ENCODE measurements at regions of chr13 and their contacts with region 1.

Region 1: GRCh38 chr13:93450191-93450621 is 223.6 kb downstream of the GPC6 start:
- DNase-seq: no peak
- ATAC-seq: no peak
- H3K4me3 ChIP-seq: no peak overlapping the region
- H3K27ac ChIP-seq: no peak overlapping the region
- H3K4me1 ChIP-seq: no peaks in the 10 kb centered on the region
- H3K27me3 ChIP-seq: no peaks in the 10 kb centered on the region
- CTCF ChIP-seq: no peak
- POLR2A ChIP-seq: no peak

Region 2: DNA sequence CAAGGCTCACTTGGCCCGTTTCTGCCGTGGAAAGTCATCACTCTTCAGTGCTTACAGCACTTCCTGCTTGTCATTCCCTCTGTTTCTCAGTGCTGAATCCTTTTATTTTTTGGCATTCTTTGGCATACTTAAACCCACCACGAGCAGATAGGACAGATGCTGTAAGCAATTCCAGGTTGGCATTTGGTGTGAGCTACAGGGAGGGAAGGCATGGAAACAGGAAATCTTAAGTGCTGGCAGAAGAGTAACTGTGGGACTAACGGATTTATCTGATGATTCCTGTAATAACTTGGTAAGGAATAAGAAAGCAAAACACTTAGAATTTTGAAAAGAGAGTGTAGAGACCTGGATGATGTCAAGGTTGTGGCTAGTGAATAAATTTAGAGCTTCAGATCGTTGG is 49.8 kb after region 1 on chr13:
- intact Hi-C with region 1: loop called in 1 of 10 experiments (anchors 5 kb)
- DNase-seq: no peak
- ATAC-seq: no peak
- H3K4me3 ChIP-seq: peak overlapping the region in 1 of 12 donors; percentile 8
- H3K27ac ChIP-seq: no peak overlapping the region
- H3K4me1 ChIP-seq: no peaks in the 10 kb centered on the region
- H3K27me3 ChIP-seq: no peaks in the 10 kb centered on the region
- CTCF ChIP-seq: no peak
- POLR2A ChIP-seq: no peak

Measured in heart left ventricle (tissue), 16 donors.